ENCODE measurements at regions of chr2 and their contacts with region 1.

Region 1: DNA sequence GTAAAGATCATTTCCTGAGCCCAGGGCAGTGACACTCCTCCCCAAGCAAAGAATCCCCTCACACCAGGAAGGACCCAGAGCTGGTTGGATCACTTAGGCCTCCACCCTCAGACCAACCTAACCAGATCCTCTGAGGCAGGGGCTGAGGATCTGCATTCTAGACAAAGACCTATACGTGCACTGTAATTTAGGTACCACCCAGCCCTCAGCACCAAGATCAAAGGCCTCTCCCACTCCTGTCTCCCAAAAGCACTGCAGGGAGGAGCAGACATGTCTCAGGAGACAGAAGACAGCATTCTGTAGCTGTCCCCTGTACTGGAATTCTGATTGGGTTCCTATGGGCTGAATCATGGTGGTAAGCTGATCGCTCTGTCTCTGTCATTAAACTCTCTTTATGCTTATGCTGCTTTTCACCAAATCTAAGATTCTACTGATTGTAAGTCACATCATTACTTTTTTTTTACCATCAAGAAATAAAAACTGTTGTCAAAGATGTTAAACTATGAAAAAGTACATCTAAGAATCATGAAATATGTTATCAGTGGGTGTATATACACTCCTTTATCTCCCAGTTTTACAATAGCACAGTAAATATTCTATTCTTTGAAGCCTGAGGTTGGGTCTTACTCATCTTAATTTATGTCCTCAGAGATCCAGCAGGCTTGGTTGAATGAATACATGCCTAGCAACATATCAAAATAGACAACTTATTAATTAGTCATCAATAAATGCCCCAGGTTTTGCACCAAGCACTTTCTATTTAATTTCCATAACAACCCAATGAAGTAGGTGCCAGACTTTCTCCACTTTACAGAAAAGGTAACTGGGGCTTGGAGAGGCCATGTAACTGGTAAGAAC is 28.3 kb downstream of the MCFD2 start:
- DNase-seq: no peak
- H3K4me3 ChIP-seq: no peak overlapping the region
- CTCF ChIP-seq: no peak

Region 2: DNA sequence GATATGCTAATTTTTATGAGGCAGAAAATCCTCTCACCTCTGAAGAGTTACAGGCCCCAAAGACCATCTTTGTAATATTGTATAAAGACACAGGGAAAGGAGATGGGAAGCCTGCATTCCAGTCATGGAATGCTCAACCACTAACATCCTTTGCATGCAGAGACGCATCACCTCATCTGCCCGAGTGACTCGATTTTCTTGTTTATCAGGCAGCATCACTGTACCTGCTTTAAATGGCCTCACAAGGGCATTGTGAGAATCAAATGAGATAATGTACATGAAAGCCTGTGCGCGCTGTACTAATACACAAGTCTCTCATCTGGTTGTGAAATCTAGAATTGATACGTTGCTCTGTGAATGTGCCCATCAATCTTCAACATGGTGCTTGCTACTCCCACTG is 418.1 kb before region 1 on chr2:
- in situ Hi-C with region 1: loop called (anchors 5 kb)
- DNase-seq: no peak
- H3K4me3 ChIP-seq: no peak overlapping the region
- CTCF ChIP-seq: no peak

Region 3: DNA sequence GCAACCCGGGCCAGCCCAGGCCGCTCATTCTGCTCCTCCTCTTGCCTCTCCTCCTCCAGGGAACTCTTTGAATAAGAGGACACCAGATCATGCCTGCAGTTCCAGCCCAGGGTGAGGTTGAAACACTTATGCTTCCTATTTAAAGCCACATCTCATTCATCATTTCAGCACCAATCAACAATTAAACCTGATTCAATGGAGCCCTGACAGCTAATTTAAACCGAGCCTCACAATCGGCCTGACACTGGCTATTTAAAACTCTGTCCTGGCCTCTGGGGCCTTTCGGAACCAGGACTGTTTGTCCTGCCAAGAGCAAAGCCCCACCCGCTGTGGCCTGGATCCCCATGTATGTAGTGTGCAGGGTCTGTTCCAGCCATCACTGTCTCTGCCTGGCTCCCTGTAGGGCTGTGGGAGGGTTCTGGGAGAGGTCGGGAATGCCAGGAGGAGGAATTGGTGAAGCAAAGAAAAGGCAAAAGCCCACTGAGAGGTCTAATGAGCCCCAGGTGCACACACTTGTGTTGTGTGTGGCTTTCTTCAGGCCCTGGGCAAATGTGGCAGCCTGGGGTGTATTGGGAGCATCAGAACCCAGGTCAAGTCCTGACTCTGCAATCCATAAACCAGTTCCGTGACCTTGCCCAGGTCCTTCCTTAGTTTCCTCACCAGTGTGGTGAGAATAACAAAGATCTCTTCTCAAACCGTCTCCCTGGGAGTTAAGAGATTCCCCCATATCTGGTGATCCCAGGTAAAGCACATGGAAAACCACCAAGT is 69.0 kb before region 1 on chr2:
- in situ Hi-C with region 1: no loop called
- DNase-seq: no peak
- H3K4me3 ChIP-seq: no peak overlapping the region
- CTCF ChIP-seq: no peak

Region 4: DNA sequence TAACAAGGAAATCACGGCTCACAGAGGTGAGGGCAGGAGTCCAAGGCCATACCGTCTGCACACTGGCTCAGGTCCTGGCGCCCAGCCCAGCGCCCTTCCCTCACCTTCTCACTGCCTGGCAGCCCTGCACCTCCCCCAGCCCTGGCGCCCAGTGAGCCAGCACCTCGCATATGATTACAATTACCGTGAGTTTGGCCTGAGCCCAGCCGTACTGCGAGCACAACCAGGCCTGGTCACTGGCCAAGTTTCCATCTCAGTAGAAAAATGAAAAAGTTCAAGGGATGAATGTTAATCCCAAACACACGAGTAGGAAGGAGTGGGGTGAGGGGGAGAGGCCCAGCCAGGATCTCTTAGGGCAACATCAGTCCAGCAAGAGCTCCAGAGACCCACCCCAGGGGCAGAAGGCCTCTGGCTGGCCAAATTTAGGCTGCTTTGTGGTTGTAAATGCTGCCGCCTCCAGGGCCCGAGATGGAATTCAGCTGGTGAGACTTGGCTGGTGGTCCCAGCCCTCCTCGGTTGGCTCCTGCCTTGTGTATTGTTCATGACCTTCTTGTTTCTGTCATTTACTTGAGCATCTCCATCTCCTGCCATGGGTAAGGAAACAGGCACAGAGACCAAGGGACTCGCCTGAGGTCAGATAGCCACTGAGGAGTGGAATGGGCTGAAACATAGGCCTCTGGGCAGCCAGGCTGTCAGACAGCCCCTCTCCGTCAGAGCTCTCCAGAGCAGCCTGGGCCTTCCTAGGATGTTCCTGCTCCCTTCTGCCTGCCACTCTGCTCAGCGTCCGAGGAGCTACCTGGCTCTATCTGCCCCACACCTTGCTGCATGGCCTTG is 39.8 kb before region 1 on chr2:
- in situ Hi-C with region 1: no loop called
- DNase-seq: peak; percentile 90
- H3K4me3 ChIP-seq: no peak overlapping the region
- CTCF ChIP-seq: no peak

Region 5: GRCh38 chr2:47002480-47003381 is 115.5 kb after region 1 on chr2:
- in situ Hi-C with region 1: no loop called
- DNase-seq: no peak
- H3K4me3 ChIP-seq: no peak overlapping the region
- CTCF ChIP-seq: no peak